ENCODE measurements at regions of chr11 and their contacts with region 1.

Region 1: GRCh38 chr11:120424185-120424969 is 87.2 kb upstream of the GRIK4 start:
- DNase-seq: peak; percentile 25
- ATAC-seq: no peak; the same call in 1 of the 2 replicates
- H3K4me3 ChIP-seq: no peak overlapping the region
- H3K27ac ChIP-seq: no peak overlapping the region
- H3K4me1 ChIP-seq: peaks cover 4% of the 10 kb centered on the region; the same call in 1 of the 2 replicates
- H3K27me3 ChIP-seq: no peaks in the 10 kb centered on the region
- CTCF ChIP-seq: no peak
- POLR2A ChIP-seq: no peak
- RAD21 ChIP-seq: no peak

Region 2: GRCh38 chr11:120365512-120365911 is 58.9 kb before region 1 on chr11:
- CTCF ChIA-PET with region 1: no interaction called
- POLR2A ChIA-PET with region 1: no interaction called
- dilution Hi-C with region 1: no loop called
- in situ Hi-C with region 1: no loop called
- intact Hi-C with region 1: loop called (anchors 5 kb)
- DNase-seq: no peak
- ATAC-seq: no peak
- H3K4me3 ChIP-seq: no peak overlapping the region
- H3K27ac ChIP-seq: no peak overlapping the region
- H3K4me1 ChIP-seq: peaks cover 12% of the 10 kb centered on the region
- H3K27me3 ChIP-seq: no peaks in the 10 kb centered on the region
- CTCF ChIP-seq: no peak
- POLR2A ChIP-seq: no peak
- RAD21 ChIP-seq: no peak

Region 3: DNA sequence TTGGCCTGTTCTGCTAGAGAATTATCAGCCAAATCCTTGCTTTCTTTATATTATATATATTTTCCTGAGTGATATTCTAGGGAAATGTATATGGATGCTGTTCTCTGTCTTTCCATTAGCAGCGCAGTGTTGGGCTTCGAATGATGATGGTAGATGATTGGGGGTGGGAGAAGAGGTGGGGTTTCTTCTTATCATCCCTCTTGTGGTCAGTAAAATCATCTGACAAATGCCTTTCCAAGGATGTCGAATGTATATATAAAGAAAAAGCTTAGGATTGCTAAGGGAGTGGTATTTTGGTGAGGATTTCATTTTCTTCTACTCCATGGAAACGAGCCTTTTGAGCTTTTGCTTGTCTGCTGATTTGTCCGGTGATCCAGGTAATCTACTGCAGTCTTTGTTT is 39.3 kb before region 1 on chr11:
- CTCF ChIA-PET with region 1: no interaction called
- POLR2A ChIA-PET with region 1: no interaction called
- dilution Hi-C with region 1: no loop called
- in situ Hi-C with region 1: no loop called
- intact Hi-C with region 1: loop called (anchors 5 kb)
- DNase-seq: peak; percentile 80
- ATAC-seq: peak; percentile 70
- H3K4me3 ChIP-seq: no peak overlapping the region
- H3K27ac ChIP-seq: no peak overlapping the region; the same call in 1 of the 2 replicates
- H3K4me1 ChIP-seq: peaks cover 15% of the 10 kb centered on the region
- H3K27me3 ChIP-seq: no peaks in the 10 kb centered on the region
- CTCF ChIP-seq: no peak; the same call in 1 of the 2 replicates
- POLR2A ChIP-seq: no peak
- RAD21 ChIP-seq: no peak

Measured in IMR-90 (cell line).